ENCODE measurements at regions of chr5 and their contacts with region 1.

Region 1: DNA sequence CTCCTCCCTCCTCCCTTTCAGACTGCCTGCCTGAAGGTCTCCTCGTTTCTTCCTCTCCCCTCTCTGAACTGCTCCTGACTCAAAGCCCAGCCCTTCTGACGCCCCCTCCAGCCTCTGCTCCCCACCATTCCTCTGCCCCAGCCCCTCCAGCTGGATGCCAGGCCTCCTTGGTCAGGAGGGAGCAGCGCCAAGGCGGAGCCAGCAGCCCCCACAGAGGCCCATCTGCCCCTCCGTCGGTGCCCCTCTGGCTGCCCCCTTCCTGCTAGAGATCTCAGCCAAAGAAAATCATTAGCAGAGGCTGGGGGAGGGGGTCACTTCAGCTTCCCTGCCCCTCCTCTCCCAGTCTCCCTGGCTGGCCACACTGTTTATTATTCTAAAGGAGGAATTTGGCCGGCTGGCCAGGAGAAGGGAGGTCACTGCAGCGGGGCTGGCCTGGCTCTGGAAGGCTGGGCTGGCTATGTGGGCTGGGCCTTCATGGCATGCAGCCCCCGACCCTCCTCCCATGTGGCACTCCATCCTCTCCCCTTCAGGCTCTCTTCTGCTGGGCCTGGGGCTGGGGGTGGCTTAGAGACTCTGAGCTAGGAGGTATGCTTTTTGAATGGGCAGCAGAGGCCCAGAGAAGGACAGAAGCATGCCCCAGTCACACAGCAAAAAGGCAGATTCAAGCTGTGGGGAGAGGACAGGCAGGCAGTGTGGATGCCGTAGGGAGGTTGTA is 16.9 kb downstream of the PDGFRB start:
- DNase-seq: peak; percentile 86
- H3K4me3 ChIP-seq: no peak overlapping the region
- H3K27ac ChIP-seq: no peak overlapping the region
- H3K4me1 ChIP-seq: peaks cover 29% of the 10 kb centered on the region
- H3K27me3 ChIP-seq: peaks cover 0 to 6% of the 10 kb centered on the region in 2 experiments
- CTCF ChIP-seq: no peak
- POLR2A ChIP-seq: no peak

Region 2: DNA sequence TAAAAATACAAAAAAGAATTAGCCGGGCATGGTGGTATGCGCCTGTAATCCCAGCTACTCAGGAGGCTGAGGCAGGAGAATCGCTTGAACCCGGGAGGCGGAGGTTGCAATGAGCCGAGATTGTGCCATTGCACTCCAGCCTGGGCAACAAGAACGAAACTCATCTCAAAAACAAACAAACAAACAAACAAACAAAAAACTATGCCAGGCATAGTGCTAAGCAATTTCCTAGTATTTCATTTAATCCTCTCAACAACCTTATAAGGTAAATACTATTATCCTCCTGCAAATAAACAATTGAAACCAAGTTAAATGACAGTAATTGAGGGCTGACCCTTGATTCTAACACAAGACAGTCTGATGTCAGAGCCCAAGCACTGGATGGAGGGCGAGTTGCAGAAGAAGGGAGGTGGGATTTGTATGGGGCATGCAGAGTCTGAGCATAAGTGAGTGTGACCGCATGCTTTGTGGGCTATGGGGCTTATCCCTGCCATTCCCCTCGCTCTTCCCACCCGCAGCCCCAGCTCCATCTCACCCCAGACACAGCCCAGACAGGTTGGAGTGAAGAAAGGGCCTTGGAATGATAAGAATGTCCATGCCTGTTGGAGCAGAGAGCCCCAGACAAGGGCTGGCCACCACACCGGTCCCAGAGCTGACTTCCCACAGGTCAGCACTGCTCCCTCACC is 335.1 kb after region 1 on chr5:
- CTCF ChIA-PET with region 1: no interaction called
- POLR2A ChIA-PET with region 1: no interaction called
- dilution Hi-C with region 1: no loop called
- intact Hi-C with region 1: no loop called
- DNase-seq: no peak
- H3K4me3 ChIP-seq: no peak overlapping the region
- H3K27ac ChIP-seq: no peak overlapping the region
- H3K4me1 ChIP-seq: peaks cover 9% of the 10 kb centered on the region
- H3K27me3 ChIP-seq: no peaks in the 10 kb centered on the region
- CTCF ChIP-seq: no peak
- POLR2A ChIP-seq: no peak

Region 3: GRCh38 chr5:151191659-151192058 is 1053.0 kb after region 1 on chr5:
- CTCF ChIA-PET with region 1: no interaction called
- POLR2A ChIA-PET with region 1: no interaction called
- dilution Hi-C with region 1: no loop called
- intact Hi-C with region 1: loop called (anchors 5 kb)
- DNase-seq: no peak
- H3K4me3 ChIP-seq: no peak overlapping the region
- H3K27ac ChIP-seq: no peak overlapping the region
- H3K4me1 ChIP-seq: no peaks in the 10 kb centered on the region
- H3K27me3 ChIP-seq: no peaks in the 10 kb centered on the region
- CTCF ChIP-seq: no peak
- POLR2A ChIP-seq: no peak

Region 4: GRCh38 chr5:151357801-151358200 is 1219.1 kb after region 1 on chr5:
- CTCF ChIA-PET with region 1: no interaction called
- POLR2A ChIA-PET with region 1: no interaction called
- dilution Hi-C with region 1: no loop called
- intact Hi-C with region 1: no loop called
- DNase-seq: no peak
- H3K4me3 ChIP-seq: no peak overlapping the region
- H3K27ac ChIP-seq: no peak overlapping the region
- H3K4me1 ChIP-seq: no peaks in the 10 kb centered on the region
- H3K27me3 ChIP-seq: no peaks in the 10 kb centered on the region
- CTCF ChIP-seq: no peak
- POLR2A ChIP-seq: no peak

Measured in endothelial cell of umbilical vein (primary cell).